ENCODE measurements at regions of chr1 and their contacts with region 1.

Region 1: DNA sequence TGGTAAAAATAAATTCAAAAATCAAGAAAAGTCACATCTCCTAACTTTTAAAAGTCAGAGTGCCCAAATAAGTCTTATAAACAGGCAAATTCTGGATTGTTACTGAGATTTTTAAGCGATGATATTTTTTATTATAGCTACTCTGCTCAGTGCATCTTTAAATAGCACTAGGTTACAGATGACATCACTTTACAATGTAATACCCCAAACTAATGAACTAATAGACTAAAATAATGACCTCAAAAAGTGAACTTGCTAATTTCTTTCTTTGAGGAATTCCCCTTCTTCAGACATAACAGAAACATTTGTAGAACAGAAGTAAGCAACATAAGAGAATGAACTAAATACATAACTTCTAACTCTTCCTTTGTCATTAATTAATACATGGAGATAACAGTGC is 33.0 kb upstream of the ACTA1 start:
- DNase-seq: no peak
- ATAC-seq: no peak
- H3K4me3 ChIP-seq: no peak overlapping the region
- H3K4me3 Mint-ChIP-seq: no peak overlapping the region
- H3K27ac ChIP-seq: no peak overlapping the region
- H3K27ac Mint-ChIP-seq: no peak overlapping the region
- H3K4me1 ChIP-seq: no peaks in the 10 kb centered on the region
- H3K4me1 Mint-ChIP-seq: no peaks in the 10 kb centered on the region
- H3K27me3 ChIP-seq: no peaks in the 10 kb centered on the region
- H3K27me3 Mint-ChIP-seq: no peaks in the 10 kb centered on the region
- CTCF ChIP-seq: no peak

Region 2: DNA sequence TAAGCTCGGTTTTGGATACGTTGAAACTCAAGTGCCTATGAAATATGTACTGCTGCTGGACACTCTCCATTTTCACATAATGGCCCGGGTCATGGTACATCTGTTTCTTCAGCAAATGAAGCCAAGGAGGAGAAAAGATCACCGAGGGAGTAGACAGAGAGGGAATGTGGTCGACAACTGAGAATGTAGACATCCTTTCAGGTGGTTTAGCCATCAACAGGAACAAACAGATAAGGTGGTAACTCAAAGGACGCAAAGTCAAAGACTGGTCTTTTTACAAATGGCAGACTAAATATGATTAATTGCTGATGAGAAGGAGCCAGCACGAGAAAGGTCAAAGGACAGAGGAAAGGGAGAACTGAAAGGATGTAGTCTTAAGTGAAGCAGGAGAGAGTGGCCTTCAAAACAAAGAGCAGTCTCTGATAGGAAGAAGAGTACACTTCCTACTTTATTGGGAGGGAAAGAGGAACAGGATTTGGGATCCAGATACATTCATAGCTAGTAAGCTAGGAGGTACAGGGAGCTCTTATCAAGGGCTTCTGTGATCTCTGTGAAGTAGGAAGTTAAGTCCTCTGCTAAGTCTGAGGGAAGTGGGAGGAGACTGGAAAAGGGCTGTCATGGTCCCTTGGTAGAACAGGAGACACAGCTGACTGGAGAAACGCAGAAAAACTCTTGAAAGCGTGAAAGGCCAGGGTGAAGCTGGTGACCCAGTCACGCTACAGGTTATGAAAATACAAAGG is 12.9 kb after region 1 on chr1:
- CTCF ChIA-PET with region 1: interaction called, 14 read pairs
- POLR2A ChIA-PET with region 1: no interaction called
- intact Hi-C with region 1: no loop called
- DNase-seq: peak in 1 of 9 experiments; percentile 23
- ATAC-seq: no peak
- H3K4me3 ChIP-seq: no peak overlapping the region
- H3K4me3 Mint-ChIP-seq: no peak overlapping the region
- H3K27ac ChIP-seq: no peak overlapping the region
- H3K27ac Mint-ChIP-seq: no peak overlapping the region
- H3K4me1 ChIP-seq: no peaks in the 10 kb centered on the region
- H3K4me1 Mint-ChIP-seq: peaks cover 13% of the 10 kb centered on the region
- H3K27me3 ChIP-seq: no peaks in the 10 kb centered on the region
- H3K27me3 Mint-ChIP-seq: no peaks in the 10 kb centered on the region
- CTCF ChIP-seq: no peak

Region 3: DNA sequence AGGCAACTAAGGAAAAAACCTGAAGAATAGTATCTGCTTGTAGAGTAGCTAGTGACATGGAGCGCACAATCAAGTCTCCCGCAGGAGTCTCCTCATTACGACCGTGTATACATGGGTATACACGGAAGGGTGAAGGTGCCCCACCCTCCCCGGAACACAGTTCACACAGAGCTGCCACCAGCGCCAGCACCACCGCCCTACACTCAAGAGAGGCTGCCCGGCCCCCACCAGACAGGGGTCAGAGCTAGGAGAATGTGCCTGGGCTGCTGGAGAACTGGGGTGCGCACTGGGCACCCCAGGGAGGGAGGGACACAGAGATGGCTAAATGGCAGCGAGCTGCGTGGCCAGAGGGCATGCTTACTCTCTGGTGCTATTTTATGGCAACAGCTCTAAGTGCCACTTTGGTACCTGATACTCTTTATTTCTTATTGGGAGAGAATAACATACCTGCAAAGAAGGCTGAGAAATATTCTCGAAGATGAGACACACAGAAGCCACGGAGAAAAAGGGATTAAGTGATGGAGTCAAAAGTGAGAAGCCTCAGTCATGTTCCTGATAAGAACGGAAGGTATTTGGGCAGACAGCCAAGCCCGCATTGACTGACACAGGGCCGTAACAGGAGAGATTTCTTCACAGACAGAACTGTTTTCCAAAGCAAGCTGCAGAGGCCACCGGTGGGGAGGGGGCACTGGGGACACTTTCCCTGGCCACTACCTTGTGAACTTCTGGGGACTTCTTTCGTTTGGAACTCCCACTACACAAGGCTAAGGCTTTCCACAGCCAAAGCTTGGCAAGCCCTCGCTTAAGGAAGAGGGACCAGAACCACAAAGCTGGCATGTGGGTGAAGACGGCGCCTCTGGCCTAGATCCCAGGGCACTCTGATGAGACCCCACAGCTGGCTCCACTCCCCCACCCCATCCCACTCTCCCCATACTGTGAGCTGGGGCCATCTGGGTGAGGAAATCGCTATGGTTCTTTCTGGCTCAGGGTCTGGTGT is 851.2 kb after region 1 on chr1:
- CTCF ChIA-PET with region 1: no interaction called
- POLR2A ChIA-PET with region 1: no interaction called
- intact Hi-C with region 1: no loop called
- DNase-seq: no peak
- ATAC-seq: no peak
- H3K4me3 ChIP-seq: no peak overlapping the region
- H3K4me3 Mint-ChIP-seq: no peak overlapping the region
- H3K27ac ChIP-seq: no peak overlapping the region
- H3K27ac Mint-ChIP-seq: no peak overlapping the region
- H3K4me1 ChIP-seq: no peaks in the 10 kb centered on the region
- H3K4me1 Mint-ChIP-seq: no peaks in the 10 kb centered on the region
- H3K27me3 ChIP-seq: no peaks in the 10 kb centered on the region
- H3K27me3 Mint-ChIP-seq: peaks cover under 1% of the 10 kb centered on the region
- CTCF ChIP-seq: no peak